ENCODE measurements at regions of chr11 and their contacts with region 1.

Region 1: DNA sequence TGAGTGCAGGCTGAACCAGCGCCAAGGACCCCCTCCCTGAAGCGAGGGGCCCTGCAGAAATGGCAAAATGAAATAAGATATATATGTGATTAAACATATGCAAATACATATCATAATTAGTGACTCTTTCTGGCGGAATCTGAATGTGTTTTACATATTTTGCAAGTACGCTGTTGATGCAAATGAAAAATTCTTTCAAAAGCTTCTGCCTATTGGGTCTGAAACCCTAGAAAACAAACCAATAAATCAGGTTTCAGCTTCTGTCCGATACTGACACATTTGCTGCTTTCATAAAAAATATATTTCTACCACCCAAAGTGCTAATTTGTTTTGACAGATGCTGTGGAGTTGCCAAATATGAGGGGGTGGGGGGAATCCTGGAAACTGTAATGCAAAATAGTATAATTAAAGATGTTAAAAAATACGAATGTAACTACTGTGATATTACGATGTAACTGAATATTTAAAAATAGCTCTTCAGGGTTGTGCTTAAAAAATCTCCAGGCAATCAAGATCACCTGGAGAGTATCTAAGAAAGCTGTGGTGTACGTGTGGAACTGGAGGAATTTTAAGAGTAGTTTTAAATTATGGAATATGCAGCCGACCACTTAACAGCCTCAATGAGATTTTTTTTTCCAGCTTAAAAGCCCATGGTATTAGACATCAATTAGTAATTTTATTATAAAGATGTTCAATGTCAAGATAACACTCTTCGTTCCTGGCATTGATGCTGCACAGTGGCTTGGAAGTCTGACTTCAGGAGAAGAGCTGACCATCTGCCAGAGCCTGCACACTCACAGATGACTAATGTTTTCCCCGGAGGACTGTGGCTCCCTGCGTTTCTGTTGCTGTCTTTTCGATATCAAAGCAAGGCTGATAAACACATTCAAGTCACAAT is 122.2 kb upstream of the RCN1 start:
- DNase-seq: no peak
- ATAC-seq: no peak
- H3K4me3 ChIP-seq: no peak overlapping the region
- H3K27ac ChIP-seq: no peak overlapping the region
- H3K4me1 ChIP-seq: no peaks in the 10 kb centered on the region
- H3K27me3 ChIP-seq: no peaks in the 10 kb centered on the region

Region 2: DNA sequence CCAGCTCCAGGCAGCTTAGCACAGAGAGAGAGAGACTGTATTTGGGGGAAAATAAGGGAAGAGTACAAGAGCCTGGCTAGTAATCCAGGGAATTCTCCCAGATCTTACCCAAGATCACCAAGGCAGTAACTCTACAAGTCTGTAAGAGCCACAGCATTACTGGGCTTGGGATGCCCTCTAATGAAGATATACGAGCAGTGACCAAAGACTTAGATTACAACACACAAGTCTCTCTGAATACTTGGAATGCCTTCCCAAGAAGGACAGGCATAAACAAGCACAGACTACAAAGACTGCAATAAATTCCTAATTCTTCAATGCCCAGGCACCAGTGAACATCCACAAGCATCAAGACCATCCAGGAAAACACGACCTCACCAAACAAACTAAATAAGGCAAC is 581.3 kb before region 1 on chr11:
- intact Hi-C with region 1: loop called in 1 of 2 experiments (anchors 10 kb)
- DNase-seq: no peak
- ATAC-seq: no peak
- H3K4me3 ChIP-seq: no peak overlapping the region
- H3K27ac ChIP-seq: no peak overlapping the region
- H3K4me1 ChIP-seq: no peaks in the 10 kb centered on the region
- H3K27me3 ChIP-seq: no peaks in the 10 kb centered on the region

Region 3: GRCh38 chr11:31664129-31664528 is 304.6 kb before region 1 on chr11:
- intact Hi-C with region 1: no loop called
- DNase-seq: no peak
- ATAC-seq: no peak
- H3K4me3 ChIP-seq: no peak overlapping the region
- H3K27ac ChIP-seq: no peak overlapping the region
- H3K4me1 ChIP-seq: no peaks in the 10 kb centered on the region
- H3K27me3 ChIP-seq: no peaks in the 10 kb centered on the region